B cell (primary cell): ENCODE measurements at regions of chr22 and their contacts with region 1.

Region 1: GRCh38 chr22:29387921-29388758 is at the start of gene AP1B1:
- DNase-seq: peak; percentile 93
- ATAC-seq: peak; percentile 77
- H3K4me3 ChIP-seq: peak within 1 kb of the TSS; percentile 76 to 96 (median 84)
- H3K4me3 Mint-ChIP-seq: peak within 1 kb of the TSS; percentile 97
- H3K27ac ChIP-seq: peak within 1 kb of the TSS; percentile 85 to 93
- H3K27ac Mint-ChIP-seq: peak within 1 kb of the TSS; percentile 98
- H3K4me1 ChIP-seq: peaks cover 51 to 57% of the 10 kb centered on the region in 2 donors
- H3K4me1 Mint-ChIP-seq: peaks cover 50% of the 10 kb centered on the region
- H3K27me3 ChIP-seq: no peaks in the 10 kb centered on the region
- H3K27me3 Mint-ChIP-seq: no peaks in the 10 kb centered on the region
- CTCF ChIP-seq: no peak
- total RNA-seq, gene AP1B1: 162 and 174 TPM in 2 replicates

Region 2: DNA sequence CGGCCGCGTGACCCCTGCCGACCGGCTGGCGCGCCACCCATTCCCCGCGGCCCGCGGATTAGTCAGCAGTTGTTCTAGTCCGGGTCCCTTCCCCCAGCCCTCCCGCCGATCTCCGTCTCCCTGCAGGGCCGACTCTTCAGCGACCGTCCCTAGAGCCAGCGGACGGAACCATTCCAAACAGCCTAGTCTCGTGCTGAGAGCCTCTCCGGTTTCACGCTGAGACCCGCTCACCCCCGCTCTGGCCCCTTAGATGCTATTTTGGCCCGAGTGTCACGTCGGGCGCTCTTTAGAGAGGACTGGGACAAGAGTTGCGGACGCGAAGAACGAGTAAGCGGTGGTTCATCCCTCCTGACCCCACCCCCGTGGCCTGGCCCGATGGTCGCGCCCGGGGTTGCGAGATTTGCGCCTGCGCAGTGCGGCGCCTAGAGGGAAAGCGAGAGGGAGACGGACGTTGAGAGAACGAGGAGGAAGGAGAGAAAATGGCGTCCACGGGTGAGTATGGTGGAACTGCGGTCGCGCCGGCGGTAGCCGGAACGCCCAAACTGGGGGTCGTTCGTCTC is 120.2 kb before region 1 on chr22 and contains the starts of genes EWSR1 and RHBDD3:
- CTCF ChIA-PET with region 1: no interaction called
- POLR2A ChIA-PET with region 1: no interaction called
- intact Hi-C with region 1: loop called (anchors 5 kb)
- DNase-seq: peak; percentile 99
- ATAC-seq: peak; percentile 86
- H3K4me3 ChIP-seq: peak within 1 kb of the TSS; percentile 61 to 96 (median 80)
- H3K4me3 Mint-ChIP-seq: peak within 1 kb of the TSS; percentile 93
- H3K27ac ChIP-seq: peak within 1 kb of the TSS; percentile 98 to 99
- H3K27ac Mint-ChIP-seq: peak within 1 kb of the TSS; percentile 96
- H3K4me1 ChIP-seq: peaks cover 42 to 47% of the 10 kb centered on the region in 2 donors
- H3K4me1 Mint-ChIP-seq: peaks cover 50% of the 10 kb centered on the region
- H3K27me3 ChIP-seq: no peaks in the 10 kb centered on the region
- H3K27me3 Mint-ChIP-seq: no peaks in the 10 kb centered on the region
- CTCF ChIP-seq: no peak
- total RNA-seq, gene EWSR1: 289 and 295 TPM in 2 replicates
- total RNA-seq, gene RHBDD3: 11.4 and 11.9 TPM in 2 replicates

Region 3: DNA sequence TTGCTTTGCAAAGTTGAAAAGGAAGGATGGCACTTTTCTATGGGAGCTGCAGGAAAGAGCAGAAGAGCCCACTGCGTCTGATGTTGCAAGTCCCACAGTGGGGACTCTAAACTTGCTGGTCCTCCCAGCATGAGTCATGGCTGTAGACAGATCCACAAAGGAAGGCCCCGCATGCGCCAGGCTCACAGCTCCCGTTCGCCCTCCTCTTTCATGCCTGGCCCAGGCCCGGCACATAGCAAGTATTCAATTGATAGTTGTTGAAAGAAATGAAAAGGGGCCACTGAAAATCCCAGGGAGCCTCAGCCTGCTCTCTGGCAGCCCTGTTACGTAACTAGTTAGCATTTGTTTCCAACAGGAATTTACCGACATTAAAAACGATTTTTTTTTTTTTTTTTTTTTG is 18.7 kb before region 1 on chr22:
- CTCF ChIA-PET with region 1: interaction called, 17 read pairs
- POLR2A ChIA-PET with region 1: interaction called, 13 read pairs
- intact Hi-C with region 1: loop called (anchors 1 kb)
- DNase-seq: no peak
- ATAC-seq: no peak
- H3K4me3 ChIP-seq: no peak overlapping the region
- H3K4me3 Mint-ChIP-seq: no peak overlapping the region
- H3K27ac ChIP-seq: no peak overlapping the region
- H3K27ac Mint-ChIP-seq: no peak overlapping the region
- H3K4me1 ChIP-seq: peaks cover 39 to 48% of the 10 kb centered on the region in 2 donors
- H3K4me1 Mint-ChIP-seq: peaks cover 69% of the 10 kb centered on the region
- H3K27me3 ChIP-seq: no peaks in the 10 kb centered on the region
- H3K27me3 Mint-ChIP-seq: no peaks in the 10 kb centered on the region
- CTCF ChIP-seq: no peak

Region 4: GRCh38 chr22:29408945-29409344 is 20.8 kb after region 1 on chr22:
- CTCF ChIA-PET with region 1: no interaction called
- POLR2A ChIA-PET with region 1: no interaction called
- intact Hi-C with region 1: loop called (anchors 2 kb)
- DNase-seq: no peak
- ATAC-seq: no peak
- H3K4me3 ChIP-seq: no peak overlapping the region
- H3K4me3 Mint-ChIP-seq: no peak overlapping the region
- H3K27ac ChIP-seq: no peak overlapping the region
- H3K27ac Mint-ChIP-seq: no peak overlapping the region
- H3K4me1 ChIP-seq: peaks cover 27 to 32% of the 10 kb centered on the region in 2 donors
- H3K4me1 Mint-ChIP-seq: peaks cover 30% of the 10 kb centered on the region
- H3K27me3 ChIP-seq: no peaks in the 10 kb centered on the region
- H3K27me3 Mint-ChIP-seq: no peaks in the 10 kb centered on the region
- CTCF ChIP-seq: no peak

Region 5: GRCh38 chr22:29553351-29554224 is 165.4 kb after region 1 on chr22 and contains the start of gene THOC5:
- CTCF ChIA-PET with region 1: interaction called, 3 read pairs
- POLR2A ChIA-PET with region 1: interaction called, 4 read pairs
- intact Hi-C with region 1: loop called (anchors 1 kb)
- DNase-seq: peak; percentile 89
- ATAC-seq: peak; percentile 93
- H3K4me3 ChIP-seq: peak within 1 kb of the TSS; percentile 80 to 93 (median 92)
- H3K4me3 Mint-ChIP-seq: peak within 1 kb of the TSS; percentile 89
- H3K27ac ChIP-seq: peak within 1 kb of the TSS; percentile 66 to 79
- H3K27ac Mint-ChIP-seq: peak within 1 kb of the TSS; percentile 96
- H3K4me1 ChIP-seq: peaks cover 7 to 15% of the 10 kb centered on the region in 2 donors
- H3K4me1 Mint-ChIP-seq: peaks cover 23% of the 10 kb centered on the region
- H3K27me3 ChIP-seq: no peaks in the 10 kb centered on the region
- H3K27me3 Mint-ChIP-seq: no peaks in the 10 kb centered on the region
- CTCF ChIP-seq: no peak
- total RNA-seq, gene THOC5: 59.1 and 66.2 TPM in 2 replicates

Region 6: DNA sequence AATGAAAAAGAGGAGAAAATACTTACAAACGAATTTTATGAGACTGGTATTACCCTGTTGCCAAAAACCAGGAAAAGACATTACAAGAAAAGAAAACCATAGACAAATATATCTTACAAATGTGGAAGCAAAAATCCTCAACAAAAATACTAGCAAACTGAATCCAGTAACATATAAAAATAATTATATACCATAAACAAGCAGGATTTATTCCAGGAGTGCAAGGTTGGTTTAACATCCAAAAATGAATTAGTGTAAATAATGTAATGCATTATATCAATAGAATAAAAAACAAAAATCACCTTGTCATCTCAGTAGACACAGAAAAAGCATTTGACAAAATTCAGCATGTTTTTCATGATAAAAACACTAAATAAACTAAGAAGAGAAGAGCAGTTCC is 222.6 kb after region 1 on chr22:
- CTCF ChIA-PET with region 1: no interaction called
- POLR2A ChIA-PET with region 1: no interaction called
- intact Hi-C with region 1: no loop called
- DNase-seq: no peak
- ATAC-seq: no peak
- H3K4me3 ChIP-seq: no peak overlapping the region
- H3K4me3 Mint-ChIP-seq: no peak overlapping the region
- H3K27ac ChIP-seq: no peak overlapping the region
- H3K27ac Mint-ChIP-seq: no peak overlapping the region
- H3K4me1 ChIP-seq: peaks cover 5 to 6% of the 10 kb centered on the region in 2 donors
- H3K4me1 Mint-ChIP-seq: peaks cover 16% of the 10 kb centered on the region
- H3K27me3 ChIP-seq: no peaks in the 10 kb centered on the region
- H3K27me3 Mint-ChIP-seq: no peaks in the 10 kb centered on the region
- CTCF ChIP-seq: no peak

Region 7: GRCh38 chr22:29766632-29767170 is 378.6 kb after region 1 on chr22 and contains the start of gene ZMAT5:
- CTCF ChIA-PET with region 1: no interaction called
- POLR2A ChIA-PET with region 1: no interaction called
- intact Hi-C with region 1: loop called (anchors 5 kb)
- DNase-seq: peak; percentile 95
- ATAC-seq: peak; percentile 97
- H3K4me3 ChIP-seq: peak within 1 kb of the TSS; percentile 73 to 99 (median 87)
- H3K4me3 Mint-ChIP-seq: peak within 1 kb of the TSS; percentile 99
- H3K27ac ChIP-seq: peak within 1 kb of the TSS; percentile 46 to 80
- H3K27ac Mint-ChIP-seq: peak within 1 kb of the TSS; percentile 95
- H3K4me1 ChIP-seq: peaks cover 17 to 20% of the 10 kb centered on the region in 2 donors
- H3K4me1 Mint-ChIP-seq: peaks cover 36% of the 10 kb centered on the region
- H3K27me3 ChIP-seq: no peaks in the 10 kb centered on the region
- H3K27me3 Mint-ChIP-seq: no peaks in the 10 kb centered on the region
- CTCF ChIP-seq: no peak
- total RNA-seq, gene ZMAT5: 16.5 and 17.8 TPM in 2 replicates